Esophagus muscularis mucosa (tissue), 4 donors: ENCODE measurements at regions of chr11 and their contacts with region 1.

Region 1: GRCh38 chr11:68257475-68258362 is 14.1 kb downstream of the C11orf24 start:
- DNase-seq: peak; percentile 99
- H3K4me3 ChIP-seq: peak overlapping the region; percentile 18 to 36 (median 26)
- H3K27ac ChIP-seq: peak overlapping the region in 2 of 4 donors; percentile 0 to 48
- H3K4me1 ChIP-seq: peaks cover 6 to 21% (median 15%) of the 10 kb centered on the region in 4 donors
- H3K27me3 ChIP-seq: no peaks in the 10 kb centered on the region
- CTCF ChIP-seq: peak; percentile 88 to 96 (median 89)
- EP300 ChIP-seq: no peak
- POLR2A ChIP-seq: no peak

Region 2: GRCh38 chr11:68297812-68298658 is 40.3 kb after region 1 on chr11:
- intact Hi-C with region 1: loop called (anchors 1 kb)
- DNase-seq: peak; percentile 94
- H3K4me3 ChIP-seq: peak overlapping the region; percentile 8 to 29 (median 15)
- H3K27ac ChIP-seq: peak overlapping the region in 1 of 4 donors; percentile 5
- H3K4me1 ChIP-seq: peaks cover 16 to 26% (median 23%) of the 10 kb centered on the region in 4 donors
- H3K27me3 ChIP-seq: no peaks in the 10 kb centered on the region
- CTCF ChIP-seq: peak in 2 of 3 experiments; percentile 99
- EP300 ChIP-seq: no peak
- POLR2A ChIP-seq: no peak

Region 3: GRCh38 chr11:68447015-68447801 is 189.5 kb after region 1 on chr11:
- intact Hi-C with region 1: loop called (anchors 2 kb)
- DNase-seq: no peak
- H3K4me3 ChIP-seq: no peak overlapping the region
- H3K27ac ChIP-seq: peak overlapping the region in 3 of 4 donors; percentile 2 to 48 (median 37)
- H3K4me1 ChIP-seq: peaks cover 0 to 14% (median 9%) of the 10 kb centered on the region in 4 donors
- H3K27me3 ChIP-seq: no peaks in the 10 kb centered on the region
- CTCF ChIP-seq: peak; percentile 91 to 97 (median 92)
- EP300 ChIP-seq: no peak
- POLR2A ChIP-seq: no peak